Activated CD4-positive, alpha-beta T cell treated with anti-CD3 and anti-CD28 coated beads, Interleukin-2, amount 10 ng/mL, durations not matched to agents 24 days and 14 days (primary cell): ENCODE measurements at regions of chr4 and their contacts with region 1.

Region 1: DNA sequence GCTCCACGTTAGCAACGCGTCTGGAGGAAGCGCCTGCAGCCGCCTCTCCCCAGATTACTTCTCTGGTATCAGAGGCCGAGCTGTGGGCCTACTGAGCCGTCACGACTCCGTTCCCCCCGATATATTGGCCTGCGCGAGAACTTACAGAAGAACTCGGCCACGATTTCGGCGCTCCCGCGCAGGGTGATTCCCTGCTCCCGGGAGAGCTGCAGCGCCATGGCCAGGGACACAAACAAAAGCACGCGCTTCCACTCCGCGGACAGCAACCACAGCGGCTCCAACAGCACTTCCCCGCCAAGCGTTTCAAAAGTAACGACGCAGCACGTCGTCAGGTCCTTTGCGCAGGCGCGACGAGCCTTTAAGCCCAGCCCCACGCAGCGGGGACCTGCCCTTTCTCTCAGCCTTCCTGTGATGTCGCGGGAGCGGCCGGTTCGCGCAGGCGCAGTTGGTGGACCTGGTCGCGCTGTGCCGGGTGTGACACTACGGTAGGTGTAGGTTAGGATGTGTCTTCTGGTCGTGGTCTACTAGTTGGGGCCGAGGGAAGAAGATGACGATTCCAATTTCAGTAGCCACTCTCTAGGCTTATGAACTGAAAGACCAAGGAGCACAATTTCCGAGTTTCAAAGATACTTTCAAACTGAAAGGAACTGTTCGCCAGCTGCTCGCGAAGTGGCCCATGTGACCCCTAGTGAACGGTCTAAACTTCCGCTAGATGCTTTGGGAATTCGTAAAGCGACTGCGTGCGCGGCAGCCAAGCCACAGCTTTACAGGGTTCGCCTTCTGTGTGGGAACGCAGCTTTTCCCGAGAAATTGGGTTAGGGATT is at the start of gene MAD2L1:
- DNase-seq: peak; percentile 99
- H3K4me3 Mint-ChIP-seq: peak within 1 kb of the TSS; percentile 91
- H3K27ac Mint-ChIP-seq: peak within 1 kb of the TSS; percentile 100
- H3K4me1 Mint-ChIP-seq: peaks cover 48% of the 10 kb centered on the region
- H3K27me3 Mint-ChIP-seq: no peaks in the 10 kb centered on the region
- total RNA-seq, gene MAD2L1: 69.2 and 75.3 TPM in 2 replicates

Region 2: DNA sequence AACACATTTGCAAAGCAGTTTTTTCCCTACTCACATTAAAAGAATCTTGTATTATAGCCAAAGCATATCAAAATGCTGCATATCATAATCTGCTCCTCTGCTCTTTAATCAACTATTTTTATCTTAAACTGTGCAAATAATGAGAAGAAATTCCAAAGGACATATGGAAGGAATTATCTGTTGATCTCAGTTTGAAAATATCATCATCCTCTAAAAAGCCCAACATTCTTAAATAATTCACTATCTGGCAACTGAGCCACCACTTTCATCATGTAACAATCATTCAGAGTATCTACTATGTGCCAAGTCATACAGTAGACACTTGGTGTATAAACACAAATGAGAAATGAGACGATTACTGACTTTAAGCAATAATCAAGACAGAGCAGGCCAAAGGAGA is 1776.9 kb before region 1 on chr4:
- intact Hi-C with region 1: loop called (anchors 5 kb)
- DNase-seq: no peak
- H3K4me3 Mint-ChIP-seq: no peak overlapping the region
- H3K27ac Mint-ChIP-seq: no peak overlapping the region
- H3K4me1 Mint-ChIP-seq: peaks cover 3% of the 10 kb centered on the region
- H3K27me3 Mint-ChIP-seq: peaks cover 11% of the 10 kb centered on the region

Region 3: GRCh38 chr4:119570401-119570800 is 496.3 kb before region 1 on chr4:
- intact Hi-C with region 1: no loop called
- DNase-seq: no peak
- H3K4me3 Mint-ChIP-seq: no peak overlapping the region
- H3K27ac Mint-ChIP-seq: no peak overlapping the region
- H3K4me1 Mint-ChIP-seq: no peaks in the 10 kb centered on the region
- H3K27me3 Mint-ChIP-seq: no peaks in the 10 kb centered on the region